Heart right ventricle (tissue), 16 donors: ENCODE measurements at regions of chr20 and their contacts with region 1.

Region 1: GRCh38 chr20:54692168-54692887 is 216.9 kb downstream of the DOK5 start:
- DNase-seq: no peak
- ATAC-seq: no peak
- H3K4me3 ChIP-seq: no peak overlapping the region
- H3K27ac ChIP-seq: no peak overlapping the region
- H3K4me1 ChIP-seq: no peaks in the 10 kb centered on the region
- H3K27me3 ChIP-seq: peaks cover 0 to 4% (median 0%) of the 10 kb centered on the region in 7 donors
- CTCF ChIP-seq: no peak

Region 2: DNA sequence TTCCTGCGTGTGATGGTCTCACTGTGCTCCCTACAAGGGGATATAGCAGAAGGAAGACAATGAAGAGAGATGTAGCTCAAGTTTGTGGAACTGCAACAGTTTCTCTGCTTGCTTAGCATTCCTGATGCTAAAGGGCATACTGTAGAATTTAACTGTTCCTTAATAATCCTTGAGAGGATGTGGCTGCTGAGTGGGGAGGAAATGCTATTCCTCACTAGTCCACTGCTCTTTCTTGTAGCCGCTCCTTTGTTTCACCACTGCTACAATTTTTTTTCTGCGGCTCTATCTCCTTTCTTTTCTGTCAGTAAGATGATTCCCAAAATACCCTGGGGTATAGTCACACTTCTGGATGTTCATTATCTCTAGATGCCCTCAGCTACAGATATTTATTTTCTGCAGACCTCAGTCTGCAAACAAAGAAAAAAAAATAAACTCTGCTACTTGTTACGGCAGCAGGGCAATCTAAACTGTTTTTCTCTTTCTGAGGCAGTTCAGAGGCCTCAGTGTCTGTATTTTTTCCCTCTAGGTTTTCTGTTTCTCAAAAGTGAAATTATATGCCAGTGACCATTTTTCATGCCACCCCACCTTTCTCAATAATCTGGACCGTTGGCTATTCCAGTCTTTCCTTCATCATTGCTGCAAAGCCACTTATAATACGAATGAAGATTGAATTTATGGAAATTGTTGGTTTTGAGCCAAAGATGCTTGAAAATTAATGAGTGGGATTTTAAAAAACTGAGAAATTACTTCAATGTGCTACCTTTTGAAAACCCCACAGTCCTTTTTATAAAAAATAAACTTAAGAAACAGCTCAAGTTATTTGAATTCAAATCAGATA is 48.4 kb after region 1 on chr20:
- intact Hi-C with region 1: no loop called
- DNase-seq: no peak
- ATAC-seq: no peak
- H3K4me3 ChIP-seq: no peak overlapping the region
- H3K27ac ChIP-seq: no peak overlapping the region
- H3K4me1 ChIP-seq: no peaks in the 10 kb centered on the region
- H3K27me3 ChIP-seq: no peaks in the 10 kb centered on the region
- CTCF ChIP-seq: no peak

Region 3: DNA sequence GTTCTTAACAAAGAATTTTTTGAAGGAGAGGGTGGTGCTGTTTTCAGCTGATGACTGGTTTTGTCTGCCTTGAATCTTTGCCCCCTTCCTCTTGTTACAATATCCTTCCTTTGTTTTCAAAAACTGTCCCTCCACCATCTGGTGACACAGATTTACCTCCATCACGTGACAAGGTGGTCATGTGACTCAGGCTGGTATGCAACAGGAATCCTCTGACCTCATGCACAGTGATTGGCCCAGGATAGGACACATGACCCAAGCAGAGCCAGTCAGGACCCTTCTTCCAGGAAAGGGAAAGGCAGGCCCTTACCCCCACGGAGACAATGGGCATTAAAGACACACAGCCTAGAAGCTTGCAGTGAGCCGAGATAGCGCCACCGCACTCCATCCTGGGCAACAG is 1471.5 kb after region 1 on chr20:
- intact Hi-C with region 1: loop called in 1 of 10 experiments (anchors 10 kb)
- DNase-seq: no peak
- ATAC-seq: no peak
- H3K4me3 ChIP-seq: no peak overlapping the region
- H3K27ac ChIP-seq: no peak overlapping the region
- H3K4me1 ChIP-seq: no peaks in the 10 kb centered on the region
- H3K27me3 ChIP-seq: peaks cover 0 to 12% (median under 1%) of the 10 kb centered on the region in 7 donors
- CTCF ChIP-seq: no peak